Mammary epithelial cell (primary cell): ENCODE measurements at regions of chr6 and their contacts with region 1.

Region 1: GRCh38 chr6:132962936-132963868 is 148.8 kb downstream of the RPS12 start:
- DNase-seq: peak; percentile 42
- H3K4me3 ChIP-seq: no peak overlapping the region
- H3K27ac ChIP-seq: no peak overlapping the region
- H3K4me1 ChIP-seq: peaks cover 4% of the 10 kb centered on the region
- H3K27me3 ChIP-seq: peaks cover under 1% of the 10 kb centered on the region
- CTCF ChIP-seq: peak; percentile 84 to 88

Region 2: DNA sequence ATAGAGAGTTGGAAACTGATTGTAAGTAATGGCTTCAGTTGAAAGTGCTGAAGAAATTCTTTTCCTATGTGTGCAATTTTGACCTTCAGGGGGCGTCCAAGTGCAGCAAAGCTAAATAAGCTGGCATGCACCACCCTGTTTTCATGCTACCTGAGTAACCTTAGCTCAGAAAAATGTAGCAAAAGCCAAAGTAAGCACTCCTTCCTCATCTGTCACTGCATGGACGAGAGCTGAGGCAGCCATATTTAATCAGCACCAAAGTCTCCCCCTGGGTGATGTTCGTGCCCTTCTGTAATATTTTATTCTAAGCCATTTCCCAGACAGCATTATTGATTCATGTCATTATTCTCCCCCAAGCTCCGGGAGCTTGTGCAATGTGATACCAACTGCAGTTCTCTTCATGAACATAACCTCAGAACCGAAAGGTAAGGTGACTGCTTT is 25.7 kb before region 1 on chr6:
- CTCF ChIA-PET with region 1: interaction called, 6 read pairs
- dilution Hi-C with region 1: no loop called
- in situ Hi-C with region 1: no loop called
- intact Hi-C with region 1: loop called (anchors 2 kb)
- DNase-seq: peak; percentile 39
- H3K4me3 ChIP-seq: no peak overlapping the region
- H3K27ac ChIP-seq: no peak overlapping the region
- H3K4me1 ChIP-seq: no peaks in the 10 kb centered on the region
- H3K27me3 ChIP-seq: peaks cover 10% of the 10 kb centered on the region
- CTCF ChIP-seq: peak; percentile 72 to 76

Region 3: DNA sequence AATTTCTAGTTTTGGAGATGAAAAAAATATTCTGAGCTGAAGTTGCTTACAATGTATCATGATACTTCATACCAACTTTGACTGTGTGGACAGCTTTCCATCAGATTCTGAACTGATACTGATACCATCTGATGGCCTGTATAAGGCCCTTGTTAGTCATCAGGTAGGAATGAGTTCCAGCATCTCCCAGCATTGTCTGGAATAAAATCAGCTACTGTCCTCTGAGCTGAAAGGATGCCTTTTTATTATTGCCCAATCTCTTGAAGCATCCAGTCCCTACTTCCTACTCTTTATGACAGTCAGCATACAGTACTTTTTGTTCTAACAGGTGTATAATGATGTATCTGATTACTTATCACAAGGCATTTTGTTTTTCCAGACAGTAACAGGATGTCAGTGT is 207.4 kb after region 1 on chr6:
- CTCF ChIA-PET with region 1: no interaction called
- dilution Hi-C with region 1: no loop called
- in situ Hi-C with region 1: loop called in 1 of 2 experiments (anchors 25 kb)
- intact Hi-C with region 1: no loop called
- DNase-seq: peak; percentile 50
- H3K4me3 ChIP-seq: no peak overlapping the region
- H3K27ac ChIP-seq: no peak overlapping the region
- H3K4me1 ChIP-seq: no peaks in the 10 kb centered on the region
- H3K27me3 ChIP-seq: no peaks in the 10 kb centered on the region
- CTCF ChIP-seq: no peak

Region 4: GRCh38 chr6:133512410-133513016 is 549.3 kb after region 1 on chr6:
- CTCF ChIA-PET with region 1: no interaction called
- dilution Hi-C with region 1: no loop called
- in situ Hi-C with region 1: loop called in 1 of 2 experiments (anchors 25 kb)
- intact Hi-C with region 1: loop called (anchors 1 kb)
- DNase-seq: peak; percentile 12
- H3K4me3 ChIP-seq: no peak overlapping the region
- H3K27ac ChIP-seq: no peak overlapping the region
- H3K4me1 ChIP-seq: no peaks in the 10 kb centered on the region
- H3K27me3 ChIP-seq: no peaks in the 10 kb centered on the region
- CTCF ChIP-seq: peak; percentile 56 to 72